Thyroid gland (tissue), 4 donors: ENCODE measurements at regions of chr3 and their contacts with region 1.

Region 1: GRCh38 chr3:133426721-133427120 is 26.9 kb downstream of the BFSP2 start:
- DNase-seq: no peak
- H3K4me3 ChIP-seq: no peak overlapping the region
- H3K27ac ChIP-seq: no peak overlapping the region
- H3K4me1 ChIP-seq: peaks cover 0 to 7% of the 10 kb centered on the region in 2 donors
- H3K27me3 ChIP-seq: no peaks in the 10 kb centered on the region
- CTCF ChIP-seq: no peak
- POLR2A ChIP-seq: no peak

Region 2: GRCh38 chr3:133573054-133573628 is 146.4 kb after region 1 on chr3:
- intact Hi-C with region 1: loop called (anchors 10 kb)
- DNase-seq: peak; percentile 100
- H3K4me3 ChIP-seq: peak overlapping the region in 2 of 3 donors; percentile 25 to 70
- H3K27ac ChIP-seq: peak overlapping the region; percentile 91 to 94 (median 93)
- H3K4me1 ChIP-seq: peaks cover 45 to 60% of the 10 kb centered on the region in 2 donors
- H3K27me3 ChIP-seq: no peaks in the 10 kb centered on the region
- CTCF ChIP-seq: peak in 1 of 6 experiments; percentile 32
- POLR2A ChIP-seq: peak in 1 of 2 donors; percentile 82